CD8-positive, alpha-beta memory T cell (primary cell): ENCODE measurements at regions of chr13 and their contacts with region 1.

Region 1: GRCh38 chr13:40777166-40777808 is 6.3 kb upstream of the MRPS31 start:
- DNase-seq: peak in 3 of 5 donors; percentile 41 to 55 (median 52)
- H3K4me3 ChIP-seq: peak overlapping the region; percentile 16
- H3K4me3 Mint-ChIP-seq: peak overlapping the region; percentile 59 to 86 (median 83)
- H3K27ac ChIP-seq: peak overlapping the region; percentile 19
- H3K27ac Mint-ChIP-seq: peak overlapping the region; percentile 91 to 99 (median 96)
- H3K4me1 ChIP-seq: peaks cover 23% of the 10 kb centered on the region
- H3K4me1 Mint-ChIP-seq: peaks cover 19 to 32% (median 27%) of the 10 kb centered on the region in 3 donors
- H3K27me3 ChIP-seq: no peaks in the 10 kb centered on the region
- H3K27me3 Mint-ChIP-seq: no peaks in the 10 kb centered on the region

Region 2: GRCh38 chr13:40764587-40765403 is 12.5 kb before region 1 on chr13:
- CTCF ChIA-PET with region 1: interaction called, 11 read pairs
- POLR2A ChIA-PET with region 1: no interaction called
- DNase-seq: no peak
- H3K4me3 ChIP-seq: no peak overlapping the region
- H3K4me3 Mint-ChIP-seq: no peak overlapping the region
- H3K27ac ChIP-seq: no peak overlapping the region
- H3K27ac Mint-ChIP-seq: peak overlapping the region; percentile 37 to 94 (median 73)
- H3K4me1 ChIP-seq: peaks cover 20% of the 10 kb centered on the region
- H3K4me1 Mint-ChIP-seq: peaks cover 38 to 43% (median 40%) of the 10 kb centered on the region in 3 donors
- H3K27me3 ChIP-seq: no peaks in the 10 kb centered on the region
- H3K27me3 Mint-ChIP-seq: no peaks in the 10 kb centered on the region

Region 3: GRCh38 chr13:40789275-40790133 is 12.2 kb after region 1 on chr13 and contains the start of gene SLC25A15:
- CTCF ChIA-PET with region 1: interaction called, 21 read pairs
- POLR2A ChIA-PET with region 1: interaction called, 10 read pairs
- DNase-seq: peak; percentile 68 to 80 (median 76)
- H3K4me3 ChIP-seq: peak within 1 kb of the TSS; percentile 60
- H3K4me3 Mint-ChIP-seq: peak within 1 kb of the TSS; percentile 80 to 92 (median 84)
- H3K27ac ChIP-seq: no peak within 1 kb of the TSS
- H3K27ac Mint-ChIP-seq: peak within 1 kb of the TSS; percentile 71 to 88 (median 84)
- H3K4me1 ChIP-seq: peaks cover 7% of the 10 kb centered on the region
- H3K4me1 Mint-ChIP-seq: peaks cover 23 to 57% (median 50%) of the 10 kb centered on the region in 3 donors
- H3K27me3 ChIP-seq: no peaks in the 10 kb centered on the region
- H3K27me3 Mint-ChIP-seq: peaks cover 0 to 2% of the 10 kb centered on the region in 2 donors
- total RNA-seq, gene SLC25A15: 23.9 to 24.3 TPM

Region 4: GRCh38 chr13:40863723-40864122 is 86.4 kb after region 1 on chr13:
- CTCF ChIA-PET with region 1: no interaction called
- POLR2A ChIA-PET with region 1: no interaction called
- DNase-seq: no peak
- H3K4me3 ChIP-seq: no peak overlapping the region
- H3K4me3 Mint-ChIP-seq: no peak overlapping the region
- H3K27ac ChIP-seq: no peak overlapping the region
- H3K27ac Mint-ChIP-seq: no peak overlapping the region
- H3K4me1 ChIP-seq: no peaks in the 10 kb centered on the region
- H3K4me1 Mint-ChIP-seq: no peaks in the 10 kb centered on the region
- H3K27me3 ChIP-seq: no peaks in the 10 kb centered on the region
- H3K27me3 Mint-ChIP-seq: no peaks in the 10 kb centered on the region

Region 5: GRCh38 chr13:40922437-40923040 is 145.3 kb after region 1 on chr13:
- CTCF ChIA-PET with region 1: interaction called, 13 read pairs
- POLR2A ChIA-PET with region 1: interaction called, 5 read pairs
- DNase-seq: no peak
- H3K4me3 ChIP-seq: no peak overlapping the region
- H3K4me3 Mint-ChIP-seq: peak overlapping the region; percentile 54 to 84 (median 72)
- H3K27ac ChIP-seq: no peak overlapping the region
- H3K27ac Mint-ChIP-seq: peak overlapping the region in 6 of 8 donors; percentile 47 to 87 (median 76)
- H3K4me1 ChIP-seq: peaks cover 7% of the 10 kb centered on the region
- H3K4me1 Mint-ChIP-seq: peaks cover 21 to 35% (median 31%) of the 10 kb centered on the region in 3 donors
- H3K27me3 ChIP-seq: no peaks in the 10 kb centered on the region
- H3K27me3 Mint-ChIP-seq: no peaks in the 10 kb centered on the region